Panc1 (cell line): ENCODE measurements at regions of chr15 and their contacts with region 1.

Region 1: GRCh38 chr15:92881802-92882696 is 18.1 kb upstream of the CHD2 start:
- DNase-seq: peak; percentile 100
- ATAC-seq: peak; percentile 97
- H3K4me3 ChIP-seq: peak overlapping the region; percentile 56 to 85
- H3K27ac ChIP-seq: peak overlapping the region; percentile 100
- H3K4me1 ChIP-seq: peaks cover 42% of the 10 kb centered on the region
- H3K27me3 ChIP-seq: no peaks in the 10 kb centered on the region
- CTCF ChIP-seq: no peak

Region 2: DNA sequence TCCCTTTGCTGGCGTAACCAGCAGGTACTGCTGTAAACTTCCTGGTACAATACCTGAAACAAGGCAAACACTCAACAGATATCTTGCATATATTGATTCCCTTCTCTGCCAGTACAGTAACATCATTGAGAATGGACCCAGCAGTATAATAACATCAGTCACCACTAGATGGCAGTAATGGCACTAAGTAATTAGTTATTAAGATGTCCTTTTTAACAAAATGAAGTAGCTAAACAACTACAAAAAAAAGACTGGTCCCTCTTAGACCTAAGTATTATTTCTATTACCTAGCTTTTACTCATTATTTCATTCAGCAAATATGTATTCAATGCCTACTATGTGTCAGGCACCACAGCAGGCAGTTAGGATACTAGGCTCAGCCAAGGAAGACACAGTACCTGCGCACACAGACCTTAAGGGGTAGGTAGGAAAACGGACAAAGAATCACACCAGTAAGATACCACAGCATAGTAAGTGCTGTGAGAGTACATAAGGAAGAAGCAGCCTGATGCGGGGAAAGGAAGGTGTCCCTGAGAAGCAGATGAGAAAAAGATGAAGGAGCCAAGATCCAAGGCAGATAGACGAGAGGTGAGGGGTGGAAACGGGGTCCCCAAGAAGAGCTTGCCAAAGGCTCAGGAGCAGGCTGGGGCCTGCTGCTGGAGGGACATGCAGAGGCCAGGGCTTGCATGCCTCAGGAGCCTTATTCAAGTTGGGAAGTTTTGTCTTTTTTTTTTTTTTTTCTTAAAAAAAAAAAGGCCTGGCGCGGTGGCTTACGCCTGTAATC is 84.7 kb before region 1 on chr15:
- CTCF ChIA-PET with region 1: no interaction called
- POLR2A ChIA-PET with region 1: interaction called, 22 read pairs
- in situ Hi-C with region 1: no loop called
- intact Hi-C with region 1: no loop called
- DNase-seq: no peak
- ATAC-seq: peak; percentile 81
- H3K4me3 ChIP-seq: no peak overlapping the region
- H3K27ac ChIP-seq: peak overlapping the region; percentile 82
- H3K4me1 ChIP-seq: peaks cover 24% of the 10 kb centered on the region
- H3K27me3 ChIP-seq: no peaks in the 10 kb centered on the region
- CTCF ChIP-seq: no peak

Region 3: DNA sequence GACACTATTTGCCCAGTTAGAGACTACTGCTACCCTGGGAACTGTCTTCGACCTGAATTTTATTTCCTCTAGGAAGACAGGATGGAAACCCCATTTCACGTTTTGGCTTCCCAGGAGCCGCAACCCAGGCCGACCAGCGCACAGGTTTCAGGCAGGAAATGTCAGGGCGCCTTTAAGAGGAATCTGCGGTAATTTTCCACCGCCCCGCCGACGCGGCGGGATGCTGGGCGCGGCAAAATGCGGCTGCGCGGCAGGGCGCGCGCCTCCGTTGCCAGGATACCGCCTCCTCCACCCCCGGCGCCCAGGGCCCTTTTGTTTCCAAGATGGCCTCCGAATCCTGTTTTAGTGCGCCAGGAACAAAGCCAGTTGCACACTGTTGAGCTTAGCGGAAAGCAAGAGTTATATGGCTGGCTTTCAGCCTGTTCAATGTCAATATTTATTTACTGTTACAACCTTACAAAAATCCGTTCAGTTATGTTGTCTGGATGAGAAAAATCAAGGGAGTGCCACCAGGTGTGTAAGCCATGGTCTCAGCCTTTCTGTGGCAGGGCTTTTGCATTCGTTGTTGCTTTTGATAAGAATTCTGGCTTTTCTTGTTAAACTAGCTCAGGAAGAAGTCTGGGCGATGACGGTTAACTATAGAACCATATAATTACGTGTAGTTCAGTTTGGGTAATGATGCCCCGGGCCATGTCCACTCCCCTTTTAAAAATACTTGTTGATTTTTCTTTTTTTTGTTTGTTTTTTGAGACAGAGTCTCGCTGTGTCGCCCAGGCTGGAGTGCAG is 61.6 kb before region 1 on chr15:
- CTCF ChIA-PET with region 1: interaction called, 4 read pairs
- POLR2A ChIA-PET with region 1: interaction called, 26 read pairs
- in situ Hi-C with region 1: no loop called
- intact Hi-C with region 1: no loop called
- DNase-seq: no peak
- ATAC-seq: peak; percentile 88
- H3K4me3 ChIP-seq: peak overlapping the region; percentile 33 to 48
- H3K27ac ChIP-seq: peak overlapping the region; percentile 100
- H3K4me1 ChIP-seq: peaks cover 73% of the 10 kb centered on the region
- H3K27me3 ChIP-seq: no peaks in the 10 kb centered on the region
- CTCF ChIP-seq: no peak

Region 4: GRCh38 chr15:92853222-92853621 is 28.8 kb before region 1 on chr15:
- CTCF ChIA-PET with region 1: no interaction called
- POLR2A ChIA-PET with region 1: interaction called, 10 read pairs
- in situ Hi-C with region 1: no loop called
- intact Hi-C with region 1: no loop called
- DNase-seq: no peak
- ATAC-seq: no peak
- H3K4me3 ChIP-seq: no peak overlapping the region
- H3K27ac ChIP-seq: peak overlapping the region; percentile 12; the same call in 1 of the 2 replicates
- H3K4me1 ChIP-seq: no peaks in the 10 kb centered on the region; the same call in 1 of the 2 replicates
- H3K27me3 ChIP-seq: no peaks in the 10 kb centered on the region
- CTCF ChIP-seq: no peak

Region 5: GRCh38 chr15:92896561-92896960 is 14.5 kb after region 1 on chr15:
- CTCF ChIA-PET with region 1: interaction called, 8 read pairs
- POLR2A ChIA-PET with region 1: interaction called, 33 read pairs
- in situ Hi-C with region 1: no loop called
- intact Hi-C with region 1: no loop called
- DNase-seq: no peak
- ATAC-seq: no peak
- H3K4me3 ChIP-seq: no peak overlapping the region
- H3K27ac ChIP-seq: no peak overlapping the region
- H3K4me1 ChIP-seq: peaks cover 24% of the 10 kb centered on the region; the same call in 1 of the 2 replicates
- H3K27me3 ChIP-seq: no peaks in the 10 kb centered on the region
- CTCF ChIP-seq: no peak

Region 6: DNA sequence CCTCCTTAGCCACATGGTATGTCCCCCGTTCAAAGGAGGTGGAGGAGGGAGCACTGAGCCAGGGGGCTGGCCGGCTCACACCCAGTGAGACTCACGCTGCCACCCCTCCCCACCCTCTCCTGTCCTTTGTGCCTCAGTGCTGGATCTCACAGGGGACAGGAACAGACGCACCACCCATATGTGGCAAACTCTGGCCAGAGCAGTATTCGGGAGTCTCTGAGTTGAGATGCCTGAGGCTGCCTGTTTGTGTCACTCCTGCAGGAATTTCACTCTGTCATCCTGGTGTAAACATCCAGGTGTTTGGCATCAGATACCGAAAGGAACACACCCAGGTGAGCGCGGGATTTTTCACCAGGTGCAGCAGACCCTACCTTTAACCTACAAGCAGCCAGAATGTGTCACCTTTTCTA is 181.2 kb after region 1 on chr15:
- CTCF ChIA-PET with region 1: no interaction called
- POLR2A ChIA-PET with region 1: no interaction called
- in situ Hi-C with region 1: no loop called
- intact Hi-C with region 1: no loop called
- DNase-seq: no peak
- ATAC-seq: no peak
- H3K4me3 ChIP-seq: no peak overlapping the region
- H3K27ac ChIP-seq: no peak overlapping the region
- H3K4me1 ChIP-seq: no peaks in the 10 kb centered on the region; the same call in 1 of the 2 replicates
- H3K27me3 ChIP-seq: no peaks in the 10 kb centered on the region; the same call in 1 of the 2 replicates
- CTCF ChIP-seq: no peak